ENCODE measurements at regions of chr1 and their contacts with region 1.

Region 1: DNA sequence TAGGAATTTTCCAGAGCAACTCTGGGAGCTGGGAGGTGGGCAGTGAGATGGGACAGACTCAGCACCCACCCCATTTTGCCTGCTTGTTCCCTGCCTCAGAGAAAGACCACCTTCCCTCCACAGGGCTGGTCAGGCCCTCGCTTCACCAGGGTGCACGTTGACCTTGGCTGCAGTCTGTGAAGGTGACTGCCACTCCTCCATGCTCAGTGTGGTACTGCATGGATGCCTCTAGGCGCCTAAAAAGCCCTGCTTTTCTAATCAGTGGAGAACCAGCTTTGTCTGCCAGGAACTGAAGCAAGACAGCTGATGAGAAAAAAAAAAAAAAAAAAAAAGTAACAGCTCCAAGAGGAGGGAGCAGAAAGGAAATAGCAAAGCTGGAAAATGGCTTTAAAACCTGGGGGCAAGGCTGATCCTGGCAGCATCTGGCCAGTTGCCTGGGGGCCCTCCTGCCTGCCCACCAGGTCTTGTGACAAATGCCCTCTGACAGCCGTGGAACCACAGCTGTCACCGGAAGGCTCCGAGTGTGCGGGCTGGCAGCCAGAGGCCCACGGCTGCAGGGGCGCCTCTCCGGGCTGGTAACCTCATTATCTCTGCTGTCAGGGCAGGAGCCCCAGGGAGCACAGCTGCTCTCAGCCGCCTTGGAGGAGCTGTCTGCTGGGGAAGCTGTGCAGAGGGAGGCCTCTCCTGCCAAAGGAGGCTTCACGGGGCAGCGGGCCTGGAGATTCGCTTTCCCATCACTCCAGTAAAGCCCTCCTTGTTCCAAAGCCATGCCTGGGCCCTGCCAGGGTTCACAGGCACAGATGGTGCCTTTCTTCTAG is 13.7 kb downstream of the KIAA1614 start:
- DNase-seq: peak; percentile 90
- H3K4me3 ChIP-seq: no peak overlapping the region
- H3K27ac ChIP-seq: peak overlapping the region; percentile 30 to 99; a peak in 3 of 4 replicates
- H3K4me1 ChIP-seq: peaks cover 13 to 81% of the 10 kb centered on the region in 2 experiments; a peak in 3 of 4 replicates
- H3K27me3 ChIP-seq: no peaks in the 10 kb centered on the region
- CTCF ChIP-seq: no peak
- EP300 ChIP-seq: peak; percentile 17 to 92; a peak in 3 of 4 replicates
- RAD21 ChIP-seq: no peak; the same call in 1 of the 2 replicates

Region 2: GRCh38 chr1:180975551-180975950 is 49.2 kb after region 1 on chr1:
- CTCF ChIA-PET with region 1: interaction called, 10 read pairs
- POLR2A ChIA-PET with region 1: no interaction called
- DNase-seq: no peak
- H3K4me3 ChIP-seq: no peak overlapping the region
- H3K27ac ChIP-seq: no peak overlapping the region; a peak in 1 of 4 replicates
- H3K4me1 ChIP-seq: peaks cover 0 to 15% of the 10 kb centered on the region in 2 experiments; a peak in 2 of 4 replicates
- H3K27me3 ChIP-seq: no peaks in the 10 kb centered on the region
- CTCF ChIP-seq: no peak
- EP300 ChIP-seq: no peak
- RAD21 ChIP-seq: no peak

Region 3: DNA sequence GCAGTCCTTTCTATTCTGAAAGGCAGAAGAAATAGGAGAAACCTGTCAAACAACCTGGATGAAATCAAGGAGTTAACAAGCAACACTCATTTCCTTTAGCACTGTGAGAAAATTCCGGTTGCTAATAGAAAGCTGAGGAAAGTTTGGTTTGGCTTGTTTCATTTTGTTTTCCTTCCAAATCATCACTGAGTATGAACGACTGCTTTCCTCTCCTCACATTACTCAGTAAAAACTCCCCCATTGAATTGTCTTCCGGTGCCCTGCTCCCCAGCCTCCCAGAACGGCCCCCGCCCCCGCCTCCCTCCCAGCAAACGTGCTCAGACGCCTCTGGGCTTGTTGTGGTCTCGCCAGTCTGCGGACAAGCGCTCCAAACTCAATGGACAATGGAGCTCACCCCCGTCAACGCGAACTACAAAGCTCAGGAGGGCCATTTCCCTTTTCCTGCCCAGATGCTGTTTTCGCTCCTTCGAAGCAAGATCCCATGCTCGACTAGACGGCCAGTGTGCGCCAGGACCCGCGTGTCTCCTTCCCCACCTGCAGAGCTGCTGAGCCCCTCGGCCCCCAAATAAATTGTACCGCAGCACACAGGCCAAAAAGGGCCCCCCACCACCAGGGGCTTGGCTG is 95.5 kb after region 1 on chr1:
- CTCF ChIA-PET with region 1: interaction called, 4 read pairs
- POLR2A ChIA-PET with region 1: interaction called, 11 read pairs
- DNase-seq: peak; percentile 70
- H3K4me3 ChIP-seq: peak overlapping the region; percentile 92 to 98
- H3K27ac ChIP-seq: peak overlapping the region; percentile 55 to 72
- H3K4me1 ChIP-seq: peaks cover 9 to 10% of the 10 kb centered on the region in 2 experiments; a peak in 3 of 4 replicates
- H3K27me3 ChIP-seq: no peaks in the 10 kb centered on the region
- CTCF ChIP-seq: no peak
- EP300 ChIP-seq: no peak
- RAD21 ChIP-seq: no peak; the same call in 1 of the 2 replicates